Calu3 (cell line): ENCODE measurements at regions of chr9 and their contacts with region 1.

Region 1: DNA sequence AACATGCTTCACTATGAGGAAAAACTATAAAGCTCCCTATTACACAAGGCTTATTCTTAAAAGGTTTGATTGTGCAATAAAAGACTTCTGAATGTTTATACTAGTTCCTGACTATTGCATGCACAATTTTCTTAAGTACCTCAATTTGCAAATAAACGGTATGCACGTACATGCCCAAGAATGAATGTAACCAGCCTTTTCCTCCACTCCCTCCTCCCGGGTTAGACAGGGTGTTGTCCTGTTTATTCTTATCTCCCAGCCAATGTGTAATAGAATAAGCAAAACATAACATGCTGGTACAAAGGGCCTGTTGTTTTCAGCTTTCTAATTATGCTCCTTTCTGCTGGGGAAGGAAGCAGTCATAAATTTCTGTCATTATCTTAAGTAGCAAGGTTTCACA is 79.1 kb downstream of the AOPEP start:
- DNase-seq: peak; percentile 75
- H3K4me3 Mint-ChIP-seq: peak overlapping the region; percentile 39
- H3K27ac Mint-ChIP-seq: peak overlapping the region; percentile 99
- H3K4me1 Mint-ChIP-seq: peaks cover 57% of the 10 kb centered on the region
- H3K27me3 Mint-ChIP-seq: no peaks in the 10 kb centered on the region
- CTCF ChIP-seq: no peak

Region 2: GRCh38 chr9:94827584-94828304 is 22.2 kb after region 1 on chr9:
- CTCF ChIA-PET with region 1: no interaction called
- intact Hi-C with region 1: no loop called
- DNase-seq: no peak
- H3K4me3 Mint-ChIP-seq: no peak overlapping the region
- H3K27ac Mint-ChIP-seq: peak overlapping the region; percentile 7
- H3K4me1 Mint-ChIP-seq: peaks cover 18% of the 10 kb centered on the region
- H3K27me3 Mint-ChIP-seq: no peaks in the 10 kb centered on the region
- CTCF ChIP-seq: no peak

Region 3: GRCh38 chr9:94867281-94867841 is 61.8 kb after region 1 on chr9:
- CTCF ChIA-PET with region 1: no interaction called
- intact Hi-C with region 1: loop called (anchors 5 kb)
- DNase-seq: peak; percentile 70
- H3K4me3 Mint-ChIP-seq: peak overlapping the region; percentile 36
- H3K27ac Mint-ChIP-seq: peak overlapping the region; percentile 93
- H3K4me1 Mint-ChIP-seq: peaks cover 32% of the 10 kb centered on the region
- H3K27me3 Mint-ChIP-seq: no peaks in the 10 kb centered on the region
- CTCF ChIP-seq: no peak